Panc1 (cell line): ENCODE measurements at regions of chr6 and their contacts with region 1.

Region 1: DNA sequence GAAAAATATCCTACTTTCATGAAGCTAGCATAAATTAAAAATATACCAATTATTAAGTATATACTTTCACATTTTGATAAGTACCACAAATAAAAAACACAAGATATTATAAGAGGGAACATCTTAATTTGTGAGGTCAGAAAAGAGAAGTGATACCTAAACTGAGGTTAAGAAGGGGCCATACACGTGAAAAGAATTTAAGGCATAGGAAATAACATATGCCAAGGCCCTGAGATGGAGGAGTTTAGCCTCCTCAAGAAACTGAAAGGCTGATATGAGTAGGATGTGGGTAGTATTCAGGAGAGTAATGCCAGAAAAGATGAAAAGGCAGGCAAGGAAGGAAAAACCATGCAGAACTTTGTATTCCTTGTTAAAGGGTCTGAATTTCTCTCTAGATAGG is 116.6 kb upstream of the HTR1E start:
- DNase-seq: no peak
- ATAC-seq: no peak
- H3K4me3 ChIP-seq: no peak overlapping the region
- H3K27ac ChIP-seq: no peak overlapping the region
- H3K4me1 ChIP-seq: no peaks in the 10 kb centered on the region
- H3K27me3 ChIP-seq: no peaks in the 10 kb centered on the region
- CTCF ChIP-seq: no peak

Region 2: GRCh38 chr6:86087954-86088353 is 732.8 kb before region 1 on chr6:
- CTCF ChIA-PET with region 1: no interaction called
- POLR2A ChIA-PET with region 1: no interaction called
- in situ Hi-C with region 1: no loop called
- intact Hi-C with region 1: no loop called
- DNase-seq: no peak
- ATAC-seq: no peak
- H3K4me3 ChIP-seq: no peak overlapping the region
- H3K27ac ChIP-seq: no peak overlapping the region
- H3K4me1 ChIP-seq: no peaks in the 10 kb centered on the region
- H3K27me3 ChIP-seq: no peaks in the 10 kb centered on the region
- CTCF ChIP-seq: no peak

Region 3: GRCh38 chr6:87574292-87574691 is 753.5 kb after region 1 on chr6:
- CTCF ChIA-PET with region 1: no interaction called
- POLR2A ChIA-PET with region 1: no interaction called
- in situ Hi-C with region 1: no loop called
- intact Hi-C with region 1: loop called (anchors 10 kb)
- DNase-seq: no peak
- ATAC-seq: no peak
- H3K4me3 ChIP-seq: no peak overlapping the region
- H3K27ac ChIP-seq: no peak overlapping the region
- H3K4me1 ChIP-seq: peaks cover 4% of the 10 kb centered on the region; the same call in 1 of the 2 replicates
- H3K27me3 ChIP-seq: no peaks in the 10 kb centered on the region
- CTCF ChIP-seq: no peak